B cell (primary cell): ENCODE measurements at regions of chr11 and their contacts with region 1.

Region 1: GRCh38 chr11:1771700-1772099 is 8.0 kb upstream of the CTSD start:
- DNase-seq: no peak
- ATAC-seq: no peak
- H3K4me3 ChIP-seq: peak overlapping the region in 1 of 5 experiments; percentile 46
- H3K4me3 Mint-ChIP-seq: no peak overlapping the region
- H3K27ac ChIP-seq: no peak overlapping the region
- H3K27ac Mint-ChIP-seq: no peak overlapping the region
- H3K4me1 ChIP-seq: peaks cover 4 to 5% of the 10 kb centered on the region in 2 donors
- H3K4me1 Mint-ChIP-seq: peaks cover 7% of the 10 kb centered on the region
- H3K27me3 ChIP-seq: peaks cover 0 to 10% (median 1%) of the 10 kb centered on the region in 4 experiments
- H3K27me3 Mint-ChIP-seq: peaks cover 35% of the 10 kb centered on the region
- CTCF ChIP-seq: no peak

Region 2: DNA sequence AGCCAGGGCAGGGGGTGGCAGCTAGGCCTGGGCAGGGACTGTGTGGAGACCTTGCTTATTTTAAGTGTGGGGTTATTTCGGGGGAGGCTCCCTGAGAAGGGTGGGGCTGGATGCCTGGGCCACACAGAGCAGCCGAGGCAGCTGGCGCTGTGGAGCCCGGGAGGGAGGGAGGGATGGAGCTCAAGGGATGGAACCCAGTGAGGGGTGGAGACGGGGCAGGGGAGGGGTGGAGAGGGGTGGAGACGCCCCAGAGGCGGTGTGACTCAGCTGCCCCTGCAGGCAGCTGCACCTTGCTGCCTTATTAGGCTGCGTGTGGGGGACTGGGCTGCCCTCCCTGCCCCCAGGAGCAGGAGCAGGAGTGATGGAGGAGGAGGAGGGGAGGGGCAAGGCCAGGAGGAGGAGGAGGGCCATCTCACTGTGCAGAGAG is 619.0 kb after region 1 on chr11:
- CTCF ChIA-PET with region 1: no interaction called
- POLR2A ChIA-PET with region 1: interaction called, 10 read pairs
- intact Hi-C with region 1: no loop called
- DNase-seq: no peak
- ATAC-seq: no peak
- H3K4me3 ChIP-seq: no peak overlapping the region
- H3K4me3 Mint-ChIP-seq: peak overlapping the region; percentile 55
- H3K27ac ChIP-seq: no peak overlapping the region
- H3K27ac Mint-ChIP-seq: peak overlapping the region; percentile 66
- H3K4me1 ChIP-seq: peaks cover 100% of the 10 kb centered on the region in 2 donors
- H3K4me1 Mint-ChIP-seq: peaks cover 83% of the 10 kb centered on the region
- H3K27me3 ChIP-seq: no peaks in the 10 kb centered on the region
- H3K27me3 Mint-ChIP-seq: no peaks in the 10 kb centered on the region
- CTCF ChIP-seq: no peak